Caco-2 (cell line): ENCODE measurements at regions of chr6 and their contacts with region 1.

Region 1: GRCh38 chr6:113642714-113643406 is 214.3 kb upstream of the MARCKS start:
- DNase-seq: peak; percentile 92 to 97
- H3K4me3 ChIP-seq: no peak overlapping the region
- H3K4me3 Mint-ChIP-seq: peak overlapping the region; percentile 62
- H3K27ac Mint-ChIP-seq: peak overlapping the region; percentile 86
- H3K4me1 ChIP-seq: peaks cover 62% of the 10 kb centered on the region
- H3K4me1 Mint-ChIP-seq: peaks cover 29% of the 10 kb centered on the region
- H3K27me3 ChIP-seq: no peaks in the 10 kb centered on the region
- H3K27me3 Mint-ChIP-seq: no peaks in the 10 kb centered on the region
- CTCF ChIP-seq: no peak

Region 2: DNA sequence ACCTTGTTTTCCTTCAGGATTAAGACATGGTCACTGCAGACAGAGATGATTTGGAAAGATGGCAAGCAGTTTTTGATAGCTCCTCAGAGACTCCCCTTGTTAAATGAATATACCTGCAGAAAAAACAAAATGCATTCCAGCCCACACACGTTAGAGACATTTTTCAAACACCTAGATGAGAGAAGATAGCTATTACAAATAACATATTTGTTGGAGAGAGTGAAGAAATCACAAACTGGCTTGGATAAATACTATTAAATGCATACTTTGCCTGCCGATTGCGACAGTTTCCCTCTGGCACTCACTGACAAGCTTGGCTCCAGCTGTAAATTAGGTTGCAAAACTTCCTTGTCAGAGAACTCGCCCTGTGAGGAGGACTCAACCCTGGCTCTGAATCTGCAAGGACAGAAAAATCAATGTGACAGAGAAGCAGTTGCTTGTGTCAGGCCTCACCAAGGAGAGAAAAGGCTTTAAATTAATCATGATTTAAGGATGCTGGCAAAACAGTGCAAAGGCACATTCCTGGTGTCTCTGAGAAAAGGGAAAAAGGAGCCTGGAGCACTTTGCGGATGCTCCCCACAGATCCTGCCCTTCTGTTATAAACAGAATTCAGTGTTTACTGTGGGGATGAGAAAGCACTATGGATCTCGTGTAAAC is 209.4 kb before region 1 on chr6:
- CTCF ChIA-PET with region 1: interaction called, 3 read pairs
- POLR2A ChIA-PET with region 1: no interaction called
- intact Hi-C with region 1: loop called (anchors 1 kb)
- DNase-seq: peak; percentile 76 to 78
- H3K4me3 ChIP-seq: no peak overlapping the region
- H3K4me3 Mint-ChIP-seq: peak overlapping the region; percentile 37
- H3K27ac Mint-ChIP-seq: peak overlapping the region; percentile 52
- H3K4me1 ChIP-seq: peaks cover 19% of the 10 kb centered on the region
- H3K4me1 Mint-ChIP-seq: peaks cover 15% of the 10 kb centered on the region
- H3K27me3 ChIP-seq: no peaks in the 10 kb centered on the region
- H3K27me3 Mint-ChIP-seq: no peaks in the 10 kb centered on the region
- CTCF ChIP-seq: no peak

Region 3: DNA sequence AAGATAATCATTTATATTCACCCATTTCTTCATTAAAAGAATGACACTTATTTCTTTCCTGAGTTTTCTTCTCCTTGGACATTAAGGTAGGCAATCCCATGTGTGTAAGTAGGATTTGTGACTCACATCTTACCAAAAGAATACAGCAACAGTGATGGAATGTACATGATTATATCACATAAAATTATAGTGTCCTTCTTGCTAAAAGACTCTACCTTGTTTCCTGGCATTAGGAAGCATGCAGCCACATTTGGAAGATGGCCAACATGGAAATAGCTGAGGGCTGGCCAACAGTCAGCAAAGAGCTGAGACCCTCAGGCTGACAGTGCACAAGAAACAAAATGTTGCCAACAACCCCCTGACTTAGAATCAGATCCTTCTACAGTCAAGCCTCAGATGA is 113.7 kb before region 1 on chr6:
- CTCF ChIA-PET with region 1: no interaction called
- POLR2A ChIA-PET with region 1: no interaction called
- intact Hi-C with region 1: loop called (anchors 5 kb)
- DNase-seq: no peak
- H3K4me3 ChIP-seq: no peak overlapping the region
- H3K4me3 Mint-ChIP-seq: no peak overlapping the region
- H3K27ac Mint-ChIP-seq: no peak overlapping the region
- H3K4me1 ChIP-seq: peaks cover 21% of the 10 kb centered on the region
- H3K4me1 Mint-ChIP-seq: peaks cover 19% of the 10 kb centered on the region
- H3K27me3 ChIP-seq: no peaks in the 10 kb centered on the region
- H3K27me3 Mint-ChIP-seq: no peaks in the 10 kb centered on the region
- CTCF ChIP-seq: no peak

Region 4: DNA sequence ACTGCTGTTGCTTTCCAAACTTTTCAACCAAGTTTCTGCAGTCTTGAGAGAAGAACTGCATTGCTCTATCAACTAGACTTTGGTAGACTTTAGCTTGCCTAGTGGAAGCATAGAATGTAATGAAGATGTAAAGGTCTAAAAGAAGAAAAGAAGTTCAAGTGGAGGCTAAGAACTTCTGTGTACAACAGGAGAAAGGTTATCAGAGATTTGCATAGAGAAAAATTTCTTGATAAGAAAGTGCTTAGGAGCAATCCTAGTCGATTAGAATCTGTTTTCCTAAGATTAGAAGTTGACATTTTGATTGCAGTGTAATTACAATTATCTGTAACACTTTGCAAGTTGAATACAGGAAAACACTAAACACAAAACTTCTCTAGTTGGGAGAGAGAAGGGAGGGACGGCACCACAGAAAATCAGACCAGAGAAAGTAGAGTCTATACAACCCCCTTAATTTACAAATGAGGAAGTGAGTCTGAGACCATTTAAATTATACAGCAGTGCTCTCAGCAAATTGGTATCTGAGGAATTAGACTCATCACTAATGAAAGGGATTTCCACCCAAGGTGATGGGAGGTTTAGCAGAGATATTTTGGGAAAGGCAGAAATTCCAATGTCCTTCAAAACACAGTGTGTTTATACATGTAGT is 20.0 kb after region 1 on chr6:
- CTCF ChIA-PET with region 1: interaction called, 3 read pairs
- POLR2A ChIA-PET with region 1: interaction called, 3 read pairs
- intact Hi-C with region 1: loop called (anchors 2 kb)
- DNase-seq: no peak
- H3K4me3 ChIP-seq: no peak overlapping the region
- H3K4me3 Mint-ChIP-seq: no peak overlapping the region
- H3K27ac Mint-ChIP-seq: no peak overlapping the region
- H3K4me1 ChIP-seq: peaks cover 19% of the 10 kb centered on the region
- H3K4me1 Mint-ChIP-seq: no peaks in the 10 kb centered on the region
- H3K27me3 ChIP-seq: no peaks in the 10 kb centered on the region
- H3K27me3 Mint-ChIP-seq: no peaks in the 10 kb centered on the region
- CTCF ChIP-seq: no peak

Region 5: DNA sequence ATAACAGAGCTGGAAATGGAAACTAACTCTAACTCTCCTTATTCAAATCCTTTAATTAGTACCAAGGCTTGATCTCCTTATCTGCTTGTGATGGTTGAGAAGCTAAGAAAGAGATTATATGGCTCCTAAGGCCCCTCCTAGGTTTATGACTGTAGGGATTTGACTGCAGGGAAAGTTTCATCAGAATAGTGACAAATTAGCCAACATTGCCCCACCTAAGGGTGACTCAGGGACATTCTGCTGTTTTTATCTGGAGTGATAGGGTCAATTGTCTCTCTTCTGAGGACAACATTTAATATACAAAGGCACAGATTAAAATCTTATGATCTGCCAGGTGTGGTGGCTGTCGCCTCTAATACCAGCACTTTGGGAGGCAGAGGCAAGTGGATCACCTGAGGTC is 76.2 kb after region 1 on chr6:
- CTCF ChIA-PET with region 1: no interaction called
- POLR2A ChIA-PET with region 1: no interaction called
- intact Hi-C with region 1: loop called (anchors 1 kb)
- DNase-seq: peak; percentile 68 to 77
- H3K4me3 ChIP-seq: no peak overlapping the region
- H3K4me3 Mint-ChIP-seq: no peak overlapping the region
- H3K27ac Mint-ChIP-seq: peak overlapping the region; percentile 65
- H3K4me1 ChIP-seq: peaks cover 18% of the 10 kb centered on the region
- H3K4me1 Mint-ChIP-seq: peaks cover 25% of the 10 kb centered on the region
- H3K27me3 ChIP-seq: no peaks in the 10 kb centered on the region
- H3K27me3 Mint-ChIP-seq: no peaks in the 10 kb centered on the region
- CTCF ChIP-seq: no peak